IMR-90 (cell line): ENCODE measurements at regions of chr10 and their contacts with region 1.

Region 1: DNA sequence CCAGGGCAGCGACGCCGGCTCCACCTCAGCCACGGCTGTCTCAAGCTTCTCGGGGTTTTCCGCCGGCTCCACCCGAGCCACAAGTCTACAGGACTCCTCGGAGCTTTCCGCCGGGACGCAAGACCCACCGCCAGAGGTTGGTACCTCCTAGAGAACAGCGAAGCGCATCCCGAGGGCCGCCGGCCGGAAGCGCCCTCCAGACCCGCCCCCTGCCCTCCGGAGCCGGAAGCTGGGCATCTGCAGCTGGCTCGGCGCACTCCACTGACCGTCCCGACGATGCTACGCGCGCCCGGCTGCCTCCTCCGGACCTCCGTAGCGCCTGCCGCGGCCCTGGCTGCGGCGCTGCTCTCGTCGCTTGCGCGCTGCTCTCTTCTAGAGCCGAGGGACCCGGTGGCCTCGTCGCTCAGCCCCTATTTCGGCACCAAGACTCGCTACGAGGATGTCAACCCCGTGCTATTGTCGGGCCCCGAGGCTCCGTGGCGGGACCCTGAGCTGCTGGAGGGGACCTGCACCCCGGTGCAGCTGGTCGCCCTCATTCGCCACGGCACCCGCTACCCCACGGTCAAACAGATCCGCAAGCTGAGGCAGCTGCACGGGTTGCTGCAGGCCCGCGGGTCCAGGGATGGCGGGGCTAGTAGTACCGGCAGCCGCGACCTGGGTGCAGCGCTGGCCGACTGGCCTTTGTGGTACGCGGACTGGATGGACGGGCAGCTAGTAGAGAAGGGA is at the start of gene MINPP1:
- DNase-seq: peak; percentile 84
- ATAC-seq: peak; percentile 96
- H3K4me3 ChIP-seq: peak within 1 kb of the TSS; percentile 83
- H3K27ac ChIP-seq: peak within 1 kb of the TSS; percentile 87
- H3K4me1 ChIP-seq: peaks cover 1% of the 10 kb centered on the region; the same call in 1 of the 2 replicates
- H3K27me3 ChIP-seq: no peaks in the 10 kb centered on the region
- CTCF ChIP-seq: no peak
- POLR2A ChIP-seq: peak; percentile 63
- RAD21 ChIP-seq: no peak
- total RNA-seq, gene MINPP1: 11.7 and 16.9 TPM in 2 replicates

Region 2: GRCh38 chr10:86899670-86900276 is 605.0 kb before region 1 on chr10:
- CTCF ChIA-PET with region 1: no interaction called
- POLR2A ChIA-PET with region 1: no interaction called
- dilution Hi-C with region 1: no loop called
- in situ Hi-C with region 1: no loop called
- intact Hi-C with region 1: no loop called
- DNase-seq: peak; percentile 71
- ATAC-seq: peak; percentile 81
- H3K4me3 ChIP-seq: no peak overlapping the region
- H3K27ac ChIP-seq: no peak overlapping the region
- H3K4me1 ChIP-seq: peaks cover 2% of the 10 kb centered on the region
- H3K27me3 ChIP-seq: no peaks in the 10 kb centered on the region
- CTCF ChIP-seq: peak; percentile 74
- POLR2A ChIP-seq: no peak
- RAD21 ChIP-seq: peak; percentile 77

Region 3: DNA sequence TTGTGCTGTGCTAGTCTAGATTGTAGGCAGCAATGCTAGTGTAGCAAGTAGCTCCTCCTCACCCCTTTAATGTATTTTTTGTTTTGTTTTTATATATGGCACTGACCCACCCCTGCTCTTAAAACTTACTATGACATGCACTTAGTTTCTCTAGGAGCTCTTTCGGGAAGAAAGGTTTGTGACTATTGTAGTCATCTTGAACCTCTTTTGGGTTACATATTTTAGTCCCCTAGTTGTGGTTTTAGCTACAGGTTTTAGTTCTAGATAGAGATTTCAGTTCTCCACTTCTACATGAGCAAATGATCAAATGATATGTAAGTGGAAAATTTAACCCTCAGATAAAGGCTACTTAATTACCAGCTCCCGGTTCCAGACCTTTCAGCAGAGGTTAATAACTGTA is 14.8 kb after region 1 on chr10:
- CTCF ChIA-PET with region 1: no interaction called
- POLR2A ChIA-PET with region 1: no interaction called
- dilution Hi-C with region 1: no loop called
- in situ Hi-C with region 1: no loop called
- intact Hi-C with region 1: loop called (anchors 2 kb)
- DNase-seq: no peak
- ATAC-seq: no peak
- H3K4me3 ChIP-seq: no peak overlapping the region
- H3K27ac ChIP-seq: no peak overlapping the region
- H3K4me1 ChIP-seq: no peaks in the 10 kb centered on the region
- H3K27me3 ChIP-seq: no peaks in the 10 kb centered on the region
- CTCF ChIP-seq: no peak
- POLR2A ChIP-seq: no peak
- RAD21 ChIP-seq: no peak